CD8-positive, alpha-beta memory T cell (primary cell): ENCODE measurements at regions of chr7 and their contacts with region 1.

Region 1: GRCh38 chr7:116679500-116679899 is 7.5 kb downstream of the MET start:
- DNase-seq: no peak
- H3K4me3 ChIP-seq: no peak overlapping the region
- H3K4me3 Mint-ChIP-seq: no peak overlapping the region
- H3K27ac ChIP-seq: no peak overlapping the region
- H3K27ac Mint-ChIP-seq: no peak overlapping the region
- H3K4me1 ChIP-seq: no peaks in the 10 kb centered on the region
- H3K4me1 Mint-ChIP-seq: no peaks in the 10 kb centered on the region
- H3K27me3 ChIP-seq: no peaks in the 10 kb centered on the region
- H3K27me3 Mint-ChIP-seq: peaks cover 0 to 36% of the 10 kb centered on the region in 2 donors

Region 2: DNA sequence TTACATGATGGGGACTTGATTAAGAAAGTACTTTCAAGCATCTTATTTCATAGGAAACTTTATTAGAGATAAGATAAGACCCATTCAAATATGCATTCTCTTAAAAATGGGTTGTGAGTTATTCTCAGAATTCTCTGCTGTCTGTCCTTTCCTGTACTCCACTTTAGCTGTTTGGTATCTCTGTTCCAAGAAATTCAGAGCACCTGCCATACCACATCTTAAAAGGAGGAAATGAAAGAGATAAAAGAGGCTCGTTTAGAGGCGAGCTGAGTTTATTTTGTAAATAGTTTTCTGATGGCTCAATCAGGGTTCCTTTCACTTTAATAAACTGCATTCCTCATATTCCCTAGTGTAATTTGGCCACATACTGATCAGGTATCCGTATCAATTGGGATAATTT is 1670.4 kb before region 1 on chr7:
- CTCF ChIA-PET with region 1: no interaction called
- POLR2A ChIA-PET with region 1: interaction called, 12 read pairs
- DNase-seq: peak in 1 of 5 donors; percentile 14
- H3K4me3 ChIP-seq: peak overlapping the region; percentile 49
- H3K4me3 Mint-ChIP-seq: peak overlapping the region; percentile 72 to 82 (median 79)
- H3K27ac ChIP-seq: no peak overlapping the region
- H3K27ac Mint-ChIP-seq: peak overlapping the region; percentile 1 to 98 (median 87)
- H3K4me1 ChIP-seq: peaks cover 89% of the 10 kb centered on the region
- H3K4me1 Mint-ChIP-seq: peaks cover 87 to 98% (median 97%) of the 10 kb centered on the region in 3 donors
- H3K27me3 ChIP-seq: no peaks in the 10 kb centered on the region
- H3K27me3 Mint-ChIP-seq: no peaks in the 10 kb centered on the region